Activated T-helper 1 cell treated with anti-CD3 and anti-CD28 coated beads, Interleukin-12 subunit alpha, Interleukin-12 subunit beta, Interleukin-2, Interleukin-4 antibody, amounts not matched to agents 30 ng/mL and 10 ng/mL and 1 ng/mL, durations not matched to agents 14 hours and 24 hours and 36 hours (primary cell): ENCODE measurements at regions of chr22 and their contacts with region 1.

Region 1: DNA sequence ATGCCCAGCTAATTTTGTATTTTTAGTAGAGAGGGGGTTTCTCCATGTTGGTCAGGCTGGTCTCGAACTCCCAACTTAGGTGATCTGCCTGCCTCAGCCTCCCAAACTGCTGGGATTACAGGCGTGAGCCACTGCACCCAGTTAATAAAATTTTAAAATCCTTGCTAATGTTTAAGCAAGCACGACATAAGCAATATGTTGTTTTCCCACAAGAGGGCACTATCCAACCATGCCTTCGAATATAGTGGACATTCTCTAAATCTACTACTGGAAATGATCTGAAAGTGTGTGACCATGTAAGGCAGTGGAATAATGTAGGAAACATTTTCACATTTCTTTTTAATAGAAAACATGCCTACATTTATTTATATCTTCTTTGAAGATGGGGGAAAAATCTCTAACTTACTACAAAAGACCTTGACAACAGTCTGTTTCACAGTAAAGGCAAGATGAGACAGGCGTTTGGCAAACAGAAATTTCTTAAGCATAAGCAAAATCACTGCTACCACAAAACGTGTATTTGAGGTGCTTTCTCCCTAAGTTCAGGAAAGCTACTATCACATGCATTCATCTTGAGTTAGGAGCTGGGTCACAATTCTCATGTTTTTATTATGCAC is 38.2 kb downstream of the PITPNB start:
- DNase-seq: peak; percentile 11
- H3K4me3 Mint-ChIP-seq: no peak overlapping the region
- H3K27ac Mint-ChIP-seq: peak overlapping the region; percentile 44
- H3K4me1 Mint-ChIP-seq: peaks cover 35% of the 10 kb centered on the region
- H3K27me3 Mint-ChIP-seq: no peaks in the 10 kb centered on the region

Region 2: GRCh38 chr22:27358096-27358870 is 522.6 kb before region 1 on chr22:
- intact Hi-C with region 1: no loop called
- DNase-seq: no peak
- H3K4me3 Mint-ChIP-seq: no peak overlapping the region
- H3K27ac Mint-ChIP-seq: no peak overlapping the region
- H3K4me1 Mint-ChIP-seq: no peaks in the 10 kb centered on the region
- H3K27me3 Mint-ChIP-seq: peaks cover 5% of the 10 kb centered on the region

Region 3: GRCh38 chr22:27588268-27588667 is 292.6 kb before region 1 on chr22:
- intact Hi-C with region 1: no loop called
- DNase-seq: no peak
- H3K4me3 Mint-ChIP-seq: no peak overlapping the region
- H3K27ac Mint-ChIP-seq: no peak overlapping the region
- H3K4me1 Mint-ChIP-seq: no peaks in the 10 kb centered on the region
- H3K27me3 Mint-ChIP-seq: no peaks in the 10 kb centered on the region

Region 4: GRCh38 chr22:27866132-27867086 is 14.5 kb before region 1 on chr22:
- intact Hi-C with region 1: loop called (anchors 2 kb)
- DNase-seq: no peak
- H3K4me3 Mint-ChIP-seq: peak overlapping the region; percentile 48
- H3K27ac Mint-ChIP-seq: peak overlapping the region; percentile 86
- H3K4me1 Mint-ChIP-seq: peaks cover 65% of the 10 kb centered on the region
- H3K27me3 Mint-ChIP-seq: no peaks in the 10 kb centered on the region

Region 5: GRCh38 chr22:27937453-27937852 is 56.6 kb after region 1 on chr22:
- intact Hi-C with region 1: no loop called
- DNase-seq: no peak
- H3K4me3 Mint-ChIP-seq: no peak overlapping the region
- H3K27ac Mint-ChIP-seq: no peak overlapping the region
- H3K4me1 Mint-ChIP-seq: no peaks in the 10 kb centered on the region
- H3K27me3 Mint-ChIP-seq: no peaks in the 10 kb centered on the region